PC-3 (cell line): ENCODE measurements at regions of chr6 and their contacts with region 1.

Region 1: DNA sequence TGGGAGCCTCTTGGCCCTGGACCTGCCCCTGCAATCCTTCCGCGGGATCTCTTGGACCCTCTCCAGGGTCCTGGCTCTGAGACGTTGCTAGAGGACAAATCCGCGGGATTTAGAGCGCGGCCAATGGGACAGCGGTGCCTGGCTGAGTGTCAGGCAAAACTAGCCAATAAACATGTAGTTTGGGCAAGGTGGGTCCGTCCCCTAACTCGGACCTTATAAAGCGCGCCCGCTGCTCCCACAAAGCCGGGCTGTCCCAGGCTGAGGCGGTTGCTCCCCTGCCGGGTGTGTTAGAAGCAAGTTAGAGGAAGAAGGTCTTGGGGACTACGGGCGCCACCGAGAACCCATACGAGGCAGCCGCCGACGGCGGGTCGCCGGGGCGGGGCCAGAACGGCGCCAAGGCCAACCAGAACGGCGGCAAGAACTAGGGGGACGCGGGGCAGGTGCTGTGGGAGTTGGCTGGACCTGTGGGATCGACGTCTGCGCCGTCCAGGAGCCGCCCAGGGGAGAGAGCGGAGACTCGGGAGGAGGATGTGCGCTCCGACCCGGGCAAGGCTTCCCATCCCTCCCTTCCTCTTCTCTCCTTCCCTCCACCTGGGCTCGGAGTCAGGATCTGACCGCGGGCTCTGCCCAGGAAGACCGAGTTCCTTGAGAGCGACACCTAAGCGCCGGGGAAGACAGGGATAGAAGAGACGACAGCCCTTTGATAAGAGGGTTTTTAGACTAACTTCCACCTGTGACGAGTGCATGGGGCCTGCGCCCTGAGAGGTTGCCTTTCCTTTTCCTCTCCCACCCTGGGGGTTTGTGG is 6.5 kb upstream of the TMEM14A start:
- DNase-seq: peak; percentile 94
- ATAC-seq: peak; percentile 94
- H3K4me3 ChIP-seq: peak overlapping the region; percentile 81
- H3K27ac ChIP-seq: no peak overlapping the region
- H3K4me1 ChIP-seq: peaks cover 24% of the 10 kb centered on the region
- H3K27me3 ChIP-seq: no peaks in the 10 kb centered on the region
- CTCF ChIP-seq: no peak

Region 2: GRCh38 chr6:51644426-51644825 is 1020.0 kb before region 1 on chr6:
- CTCF ChIA-PET with region 1: no interaction called
- POLR2A ChIA-PET with region 1: no interaction called
- intact Hi-C with region 1: no loop called
- DNase-seq: peak; percentile 89
- ATAC-seq: peak; percentile 37
- H3K4me3 ChIP-seq: no peak overlapping the region
- H3K27ac ChIP-seq: peak overlapping the region; percentile 27
- H3K4me1 ChIP-seq: peaks cover 19% of the 10 kb centered on the region
- H3K27me3 ChIP-seq: no peaks in the 10 kb centered on the region
- CTCF ChIP-seq: no peak

Region 3: GRCh38 chr6:52284460-52285176 is 379.8 kb before region 1 on chr6 and contains the start of gene MCM3:
- CTCF ChIA-PET with region 1: no interaction called
- POLR2A ChIA-PET with region 1: no interaction called
- intact Hi-C with region 1: loop called (anchors 2 kb)
- DNase-seq: peak; percentile 99
- ATAC-seq: peak; percentile 98
- H3K4me3 ChIP-seq: peak within 1 kb of the TSS; percentile 93
- H3K27ac ChIP-seq: peak within 1 kb of the TSS; percentile 62
- H3K4me1 ChIP-seq: peaks cover 22% of the 10 kb centered on the region
- H3K27me3 ChIP-seq: no peaks in the 10 kb centered on the region
- CTCF ChIP-seq: no peak
- total RNA-seq, gene MCM3: 201 and 203 TPM in 2 replicates

Region 4: GRCh38 chr6:52419809-52420670 is 244.3 kb before region 1 on chr6 and contains the start of gene EFHC1:
- CTCF ChIA-PET with region 1: interaction called, 3 read pairs
- POLR2A ChIA-PET with region 1: no interaction called
- intact Hi-C with region 1: loop called (anchors 1 kb)
- DNase-seq: peak; percentile 99
- ATAC-seq: peak; percentile 81
- H3K4me3 ChIP-seq: peak within 1 kb of the TSS; percentile 78
- H3K27ac ChIP-seq: peak within 1 kb of the TSS; percentile 39
- H3K4me1 ChIP-seq: peaks cover 62% of the 10 kb centered on the region
- H3K27me3 ChIP-seq: no peaks in the 10 kb centered on the region
- CTCF ChIP-seq: no peak
- total RNA-seq, gene EFHC1: 14.5 and 22.4 TPM in 2 replicates

Region 5: GRCh38 chr6:52529311-52529710 is 135.1 kb before region 1 on chr6:
- CTCF ChIA-PET with region 1: no interaction called
- POLR2A ChIA-PET with region 1: no interaction called
- intact Hi-C with region 1: no loop called
- DNase-seq: no peak
- ATAC-seq: no peak
- H3K4me3 ChIP-seq: no peak overlapping the region
- H3K27ac ChIP-seq: no peak overlapping the region
- H3K4me1 ChIP-seq: peaks cover 10% of the 10 kb centered on the region; the same call in 1 of the 2 replicates
- H3K27me3 ChIP-seq: no peaks in the 10 kb centered on the region
- CTCF ChIP-seq: no peak

Region 6: DNA sequence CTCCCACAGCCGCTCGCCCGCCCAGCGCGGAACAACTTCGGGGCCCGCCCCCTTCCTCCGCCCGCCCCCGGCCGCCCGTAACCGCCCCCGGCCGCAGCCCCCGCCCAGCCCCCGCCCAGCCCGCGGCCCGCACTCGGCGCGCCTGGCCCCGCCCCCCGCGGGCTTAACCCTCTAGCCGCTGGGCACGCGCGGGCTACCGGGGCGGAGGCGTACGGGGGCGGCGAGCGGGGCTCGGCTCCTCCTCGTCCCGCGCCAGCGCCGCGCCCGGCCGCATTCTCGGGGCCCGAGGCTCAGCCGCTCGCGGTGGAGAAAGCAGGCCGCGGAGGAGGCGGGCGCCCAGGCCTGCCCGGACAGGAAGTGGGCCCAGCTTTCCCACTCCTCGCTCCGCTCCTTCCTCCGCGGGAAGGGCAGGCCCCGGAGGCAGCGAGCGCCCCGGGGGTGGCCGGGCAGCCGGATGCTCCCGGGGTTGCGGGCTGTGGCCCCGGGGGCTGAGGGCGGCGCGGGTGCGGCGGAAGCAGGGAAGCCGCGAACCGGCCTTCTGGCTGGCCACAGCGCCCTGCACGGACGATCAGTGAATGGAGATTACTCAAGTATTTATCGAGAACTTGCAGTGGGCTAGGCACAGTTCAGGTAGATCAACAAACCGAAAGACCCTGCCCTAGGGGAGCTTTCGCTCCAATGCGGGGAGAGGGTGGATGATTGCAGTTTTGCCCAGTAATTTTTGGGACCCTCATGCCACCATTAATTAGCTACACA is 87.2 kb before region 1 on chr6 and contains the start of gene TRAM2:
- CTCF ChIA-PET with region 1: no interaction called
- POLR2A ChIA-PET with region 1: no interaction called
- intact Hi-C with region 1: loop called (anchors 1 kb)
- DNase-seq: peak; percentile 81
- ATAC-seq: peak; percentile 80
- H3K4me3 ChIP-seq: peak within 1 kb of the TSS; percentile 87
- H3K27ac ChIP-seq: peak within 1 kb of the TSS; percentile 64
- H3K4me1 ChIP-seq: peaks cover 33% of the 10 kb centered on the region
- H3K27me3 ChIP-seq: no peaks in the 10 kb centered on the region
- CTCF ChIP-seq: peak; percentile 29; the same call in 1 of the 2 replicates
- total RNA-seq, gene TRAM2: 17.7 and 19.6 TPM in 2 replicates

Region 7: GRCh38 chr6:52610745-52611355 is 53.5 kb before region 1 on chr6:
- CTCF ChIA-PET with region 1: no interaction called
- POLR2A ChIA-PET with region 1: interaction called, 29 read pairs
- intact Hi-C with region 1: no loop called
- DNase-seq: peak; percentile 42
- ATAC-seq: peak; percentile 84
- H3K4me3 ChIP-seq: no peak overlapping the region
- H3K27ac ChIP-seq: no peak overlapping the region
- H3K4me1 ChIP-seq: peaks cover 26% of the 10 kb centered on the region
- H3K27me3 ChIP-seq: no peaks in the 10 kb centered on the region
- CTCF ChIP-seq: no peak

Region 8: GRCh38 chr6:53086302-53086701 is 421.9 kb after region 1 on chr6:
- CTCF ChIA-PET with region 1: no interaction called
- POLR2A ChIA-PET with region 1: no interaction called
- intact Hi-C with region 1: no loop called
- DNase-seq: no peak
- ATAC-seq: no peak
- H3K4me3 ChIP-seq: no peak overlapping the region
- H3K27ac ChIP-seq: no peak overlapping the region
- H3K4me1 ChIP-seq: peaks cover 7% of the 10 kb centered on the region; the same call in 1 of the 2 replicates
- H3K27me3 ChIP-seq: no peaks in the 10 kb centered on the region
- CTCF ChIP-seq: no peak

Region 9: GRCh38 chr6:53437557-53438202 is 773.3 kb after region 1 on chr6:
- CTCF ChIA-PET with region 1: no interaction called
- POLR2A ChIA-PET with region 1: no interaction called
- intact Hi-C with region 1: no loop called
- DNase-seq: peak; percentile 90
- ATAC-seq: peak; percentile 79
- H3K4me3 ChIP-seq: no peak overlapping the region
- H3K27ac ChIP-seq: no peak overlapping the region
- H3K4me1 ChIP-seq: peaks cover 20% of the 10 kb centered on the region
- H3K27me3 ChIP-seq: no peaks in the 10 kb centered on the region
- CTCF ChIP-seq: peak; percentile 94